ENCODE measurements at regions of chr20 and their contacts with region 1.

Region 1: DNA sequence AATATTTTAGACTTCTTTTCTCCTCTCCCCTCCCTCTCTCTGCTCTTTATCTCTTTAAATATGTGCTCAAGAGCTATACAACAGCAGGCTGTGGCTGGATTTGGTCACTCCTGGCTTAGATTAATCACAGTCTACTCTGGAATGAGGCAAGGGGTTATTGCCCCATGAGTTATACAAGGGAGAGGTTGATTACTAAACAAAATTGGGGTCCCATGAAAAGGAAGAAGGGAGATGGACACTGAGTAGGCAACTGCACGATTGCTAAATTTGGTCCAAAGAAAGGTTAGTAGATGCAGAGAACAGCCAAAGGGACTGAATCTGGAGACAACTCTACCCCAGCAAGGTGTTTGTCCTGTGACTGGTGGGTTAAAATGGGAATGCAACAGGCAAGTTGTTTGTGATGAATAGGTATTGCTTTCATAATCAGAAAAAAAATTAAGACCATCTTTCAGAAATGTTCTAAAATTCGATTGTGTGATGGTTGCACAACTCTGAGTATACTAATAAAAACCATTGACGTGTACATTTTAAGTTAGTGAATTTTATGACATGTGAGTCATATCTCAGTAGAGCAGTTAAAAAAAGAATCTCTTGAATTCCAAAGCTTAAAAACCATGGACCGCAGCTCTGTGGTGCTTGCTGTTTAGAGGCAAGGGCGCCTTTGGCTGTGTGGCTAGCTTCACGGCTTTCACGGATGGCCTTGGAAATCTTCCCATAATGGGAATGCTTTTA is 57.1 kb downstream of the KIZ start:
- DNase-seq: peak; percentile 96
- ATAC-seq: peak; percentile 96
- H3K4me3 ChIP-seq: peak overlapping the region; percentile 52
- H3K27ac ChIP-seq: peak overlapping the region; percentile 99
- H3K4me1 ChIP-seq: peaks cover 40% of the 10 kb centered on the region
- H3K27me3 ChIP-seq: no peaks in the 10 kb centered on the region
- CTCF ChIP-seq: no peak

Region 2: GRCh38 chr20:21089395-21089794 is 93.6 kb before region 1 on chr20:
- CTCF ChIA-PET with region 1: no interaction called
- POLR2A ChIA-PET with region 1: no interaction called
- intact Hi-C with region 1: loop called (anchors 2 kb)
- DNase-seq: peak; percentile 94
- ATAC-seq: peak; percentile 91
- H3K4me3 ChIP-seq: peak overlapping the region; percentile 10; the same call in 1 of the 2 replicates
- H3K27ac ChIP-seq: peak overlapping the region; percentile 50
- H3K4me1 ChIP-seq: peaks cover 25% of the 10 kb centered on the region
- H3K27me3 ChIP-seq: peaks cover 62% of the 10 kb centered on the region
- CTCF ChIP-seq: no peak

Region 3: DNA sequence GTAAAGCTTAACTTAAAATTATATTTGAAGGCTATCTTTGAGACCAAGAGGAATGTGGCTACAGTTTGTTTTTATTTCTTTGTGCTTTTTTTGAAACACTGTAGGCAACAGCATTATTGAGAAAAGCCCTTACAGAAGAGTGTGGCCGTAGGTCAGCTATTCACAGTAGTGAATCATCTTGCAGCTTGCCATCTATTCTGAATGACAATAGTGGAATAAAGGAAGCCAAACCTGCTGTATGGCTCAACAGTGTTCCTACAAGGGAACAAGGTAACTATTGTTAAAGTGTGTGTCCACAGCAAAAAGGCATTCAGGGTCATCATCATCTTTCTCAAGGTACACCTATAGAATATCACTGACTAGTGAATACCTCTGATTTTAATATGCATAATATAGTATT is 31.4 kb after region 1 on chr20:
- CTCF ChIA-PET with region 1: no interaction called
- POLR2A ChIA-PET with region 1: no interaction called
- intact Hi-C with region 1: no loop called
- DNase-seq: peak; percentile 69
- ATAC-seq: peak; percentile 77
- H3K4me3 ChIP-seq: no peak overlapping the region
- H3K27ac ChIP-seq: no peak overlapping the region
- H3K4me1 ChIP-seq: peaks cover 7% of the 10 kb centered on the region
- H3K27me3 ChIP-seq: no peaks in the 10 kb centered on the region
- CTCF ChIP-seq: no peak

Region 4: GRCh38 chr20:21228511-21228910 is 45.5 kb after region 1 on chr20:
- CTCF ChIA-PET with region 1: no interaction called
- POLR2A ChIA-PET with region 1: no interaction called
- intact Hi-C with region 1: loop called (anchors 5 kb)
- DNase-seq: no peak
- ATAC-seq: no peak
- H3K4me3 ChIP-seq: no peak overlapping the region
- H3K27ac ChIP-seq: peak overlapping the region; percentile 77
- H3K4me1 ChIP-seq: peaks cover 29% of the 10 kb centered on the region
- H3K27me3 ChIP-seq: no peaks in the 10 kb centered on the region
- CTCF ChIP-seq: no peak